T-cell (primary cell): ENCODE measurements at regions of chr10 and their contacts with region 1.

Region 1: DNA sequence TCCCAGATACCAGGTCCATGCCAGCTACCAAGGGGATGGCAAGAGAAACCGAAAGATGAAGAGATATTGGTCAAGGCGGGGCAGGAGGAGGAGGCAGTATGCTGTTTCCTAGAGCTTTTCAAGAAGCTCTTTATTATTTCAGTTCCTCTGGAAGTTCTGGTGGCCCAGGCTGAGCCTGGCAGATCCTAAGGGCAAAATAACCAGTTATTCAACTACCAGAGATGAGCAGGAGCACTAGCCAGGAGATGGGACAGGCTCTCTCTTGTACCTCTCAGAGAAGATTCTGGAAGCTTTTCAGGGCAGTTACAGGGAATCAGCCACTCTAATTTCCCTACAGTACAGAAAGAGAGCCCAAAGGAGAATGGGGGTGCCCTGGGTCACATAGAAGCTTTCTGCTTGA is 5.3 kb downstream of the DNAJB12 start:
- DNase-seq: no peak
- ATAC-seq: no peak
- H3K4me3 ChIP-seq: no peak overlapping the region
- H3K4me3 Mint-ChIP-seq: peak overlapping the region in 1 of 3 donors; percentile 0
- H3K27ac ChIP-seq: no peak overlapping the region
- H3K27ac Mint-ChIP-seq: no peak overlapping the region
- H3K4me1 ChIP-seq: peaks cover 6 to 33% of the 10 kb centered on the region in 2 experiments
- H3K4me1 Mint-ChIP-seq: peaks cover 45 to 57% (median 47%) of the 10 kb centered on the region in 3 donors
- H3K27me3 ChIP-seq: no peaks in the 10 kb centered on the region
- H3K27me3 Mint-ChIP-seq: no peaks in the 10 kb centered on the region

Region 2: DNA sequence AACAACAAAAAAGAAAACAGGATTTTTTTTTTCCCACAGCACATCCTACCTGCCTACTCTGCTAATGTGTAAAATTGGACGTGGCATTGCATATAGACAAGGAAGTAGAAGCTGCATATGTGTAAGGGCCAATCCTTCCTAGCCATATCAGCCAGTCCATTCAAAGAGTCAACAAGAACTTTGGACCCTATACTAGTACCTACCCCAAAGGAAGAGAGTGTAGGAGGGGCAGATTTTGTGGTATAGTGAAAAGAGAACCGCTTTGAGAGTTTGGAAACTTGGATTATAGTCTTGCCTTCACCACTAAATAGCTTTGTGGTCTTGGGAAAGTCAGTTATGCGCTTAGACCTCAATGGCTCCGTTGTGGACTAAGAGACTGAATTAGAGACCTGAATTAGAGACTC is 330.4 kb after region 1 on chr10:
- CTCF ChIA-PET with region 1: no interaction called
- POLR2A ChIA-PET with region 1: interaction called in 1 of 2 experiments, 13 read pairs
- DNase-seq: no peak
- ATAC-seq: no peak
- H3K4me3 ChIP-seq: no peak overlapping the region
- H3K4me3 Mint-ChIP-seq: no peak overlapping the region
- H3K27ac ChIP-seq: no peak overlapping the region
- H3K27ac Mint-ChIP-seq: no peak overlapping the region
- H3K4me1 ChIP-seq: no peaks in the 10 kb centered on the region
- H3K4me1 Mint-ChIP-seq: peaks cover 0 to 4% (median 4%) of the 10 kb centered on the region in 3 donors
- H3K27me3 ChIP-seq: no peaks in the 10 kb centered on the region
- H3K27me3 Mint-ChIP-seq: no peaks in the 10 kb centered on the region